Activated T-helper 1 cell treated with anti-CD3 and anti-CD28 coated beads, Interleukin-12 subunit alpha, Interleukin-12 subunit beta, Interleukin-2, Interleukin-4 antibody, amounts not matched to agents 30 ng/mL and 10 ng/mL and 1 ng/mL, durations not matched to agents 14 hours and 24 hours and 36 hours (primary cell): ENCODE measurements at regions of chr22 and their contacts with region 1.

Region 1: GRCh38 chr22:19479357-19480172 is at the start of gene CDC45:
- DNase-seq: peak; percentile 93
- H3K4me3 Mint-ChIP-seq: peak within 1 kb of the TSS; percentile 97
- H3K27ac Mint-ChIP-seq: peak within 1 kb of the TSS; percentile 99
- H3K4me1 Mint-ChIP-seq: peaks cover 47% of the 10 kb centered on the region
- H3K27me3 Mint-ChIP-seq: no peaks in the 10 kb centered on the region
- total RNA-seq, gene CDC45: 104 and 116 TPM in 2 replicates

Region 2: GRCh38 chr22:19109198-19110067 is 370.1 kb before region 1 on chr22:
- intact Hi-C with region 1: loop called (anchors 5 kb)
- DNase-seq: peak; percentile 42
- H3K4me3 Mint-ChIP-seq: peak overlapping the region; percentile 66
- H3K27ac Mint-ChIP-seq: peak overlapping the region; percentile 62
- H3K4me1 Mint-ChIP-seq: peaks cover 54% of the 10 kb centered on the region
- H3K27me3 Mint-ChIP-seq: no peaks in the 10 kb centered on the region

Region 3: GRCh38 chr22:19143967-19144400 is 335.6 kb before region 1 on chr22:
- intact Hi-C with region 1: loop called (anchors 1 kb)
- DNase-seq: peak; percentile 40
- H3K4me3 Mint-ChIP-seq: peak overlapping the region; percentile 98
- H3K27ac Mint-ChIP-seq: peak overlapping the region; percentile 97
- H3K4me1 Mint-ChIP-seq: peaks cover 23% of the 10 kb centered on the region
- H3K27me3 Mint-ChIP-seq: peaks cover 22% of the 10 kb centered on the region

Region 4: DNA sequence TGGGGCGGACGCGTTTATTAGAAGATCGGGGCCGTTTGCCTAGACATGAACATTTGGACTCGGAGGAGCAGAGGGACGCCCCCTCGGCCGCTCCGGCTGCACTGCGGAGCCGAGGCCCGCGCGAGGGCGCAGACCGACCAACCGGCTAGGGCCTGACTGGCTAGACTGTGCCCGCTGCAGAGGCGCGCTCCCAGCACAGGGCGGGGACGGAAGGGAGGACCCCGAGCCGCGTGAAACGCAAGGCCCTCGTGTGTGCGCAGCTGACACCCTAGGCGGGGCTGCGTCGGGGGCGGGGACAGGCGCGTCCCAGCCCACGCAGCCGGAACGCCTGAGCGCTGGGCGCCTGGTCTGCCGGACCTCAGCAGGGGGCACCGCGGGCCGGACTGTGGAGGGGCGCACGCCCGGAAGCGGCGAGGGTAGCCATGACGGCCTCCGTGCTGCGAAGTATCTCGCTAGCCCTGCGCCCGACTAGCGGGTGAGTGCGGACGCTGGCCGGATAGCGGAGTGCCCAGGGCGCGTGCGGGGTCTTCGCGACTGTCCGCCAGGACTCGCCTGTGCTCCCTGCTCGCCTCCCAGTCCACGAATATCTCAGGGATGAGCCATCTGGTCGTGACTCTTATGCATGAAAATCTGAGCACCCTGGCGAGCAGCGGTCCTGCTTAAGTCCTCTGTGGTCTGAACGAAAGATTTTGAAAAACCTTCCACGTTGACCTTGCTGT is 47.3 kb before region 1 on chr22 and contains the start of gene MRPL40:
- intact Hi-C with region 1: loop called (anchors 1 kb)
- DNase-seq: peak; percentile 88
- H3K4me3 Mint-ChIP-seq: peak within 1 kb of the TSS; percentile 92
- H3K27ac Mint-ChIP-seq: peak within 1 kb of the TSS; percentile 94
- H3K4me1 Mint-ChIP-seq: peaks cover 41% of the 10 kb centered on the region
- H3K27me3 Mint-ChIP-seq: no peaks in the 10 kb centered on the region
- total RNA-seq, gene MRPL40: 36.0 and 38.5 TPM in 2 replicates

Region 5: DNA sequence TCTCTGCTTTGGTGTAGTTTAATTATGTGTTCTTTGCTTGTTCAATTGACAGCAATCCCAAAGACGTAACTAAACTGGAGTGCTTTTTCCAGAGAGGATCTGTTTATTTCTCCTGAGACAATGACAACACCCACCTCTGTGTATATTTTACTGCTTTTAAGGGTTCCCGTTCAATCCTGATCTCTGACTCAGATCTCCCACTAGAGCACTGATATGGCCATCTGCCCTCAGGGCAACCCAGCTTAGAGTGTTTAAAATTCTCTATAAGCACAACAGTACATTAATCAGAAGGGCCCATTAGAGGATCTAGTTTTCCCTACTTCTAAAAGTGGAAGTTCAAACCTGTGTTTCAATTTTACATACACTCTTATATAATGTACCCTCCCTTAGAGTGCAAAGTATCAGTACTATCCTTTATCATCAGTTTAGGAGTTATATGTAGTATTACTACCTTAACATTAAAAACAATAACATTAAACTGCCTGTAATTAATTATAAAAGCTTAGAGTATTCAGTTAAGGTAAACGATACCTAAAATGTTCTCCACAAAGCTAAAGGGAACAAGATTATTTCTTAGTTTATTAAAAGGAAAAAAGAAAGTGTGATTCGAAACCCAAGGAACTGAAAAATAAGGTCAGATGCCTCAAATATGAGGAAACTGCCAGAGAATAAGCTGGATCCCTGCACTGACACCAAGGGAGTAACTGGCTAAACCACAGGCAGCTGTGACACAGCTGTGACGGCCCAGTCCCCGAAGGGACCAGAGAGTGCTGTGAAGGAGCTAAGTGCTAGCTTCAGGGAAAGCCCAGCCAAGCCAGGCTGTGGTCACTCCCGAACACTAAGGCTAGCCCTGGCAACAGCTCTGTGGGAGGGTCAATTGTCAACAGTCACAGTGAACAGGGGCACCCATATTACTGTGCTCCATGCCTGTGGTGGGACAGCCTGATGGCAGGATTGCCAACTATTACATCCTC is 15.8 kb before region 1 on chr22:
- intact Hi-C with region 1: no loop called
- DNase-seq: no peak
- H3K4me3 Mint-ChIP-seq: no peak overlapping the region
- H3K27ac Mint-ChIP-seq: no peak overlapping the region
- H3K4me1 Mint-ChIP-seq: peaks cover 22% of the 10 kb centered on the region
- H3K27me3 Mint-ChIP-seq: no peaks in the 10 kb centered on the region

Region 6: DNA sequence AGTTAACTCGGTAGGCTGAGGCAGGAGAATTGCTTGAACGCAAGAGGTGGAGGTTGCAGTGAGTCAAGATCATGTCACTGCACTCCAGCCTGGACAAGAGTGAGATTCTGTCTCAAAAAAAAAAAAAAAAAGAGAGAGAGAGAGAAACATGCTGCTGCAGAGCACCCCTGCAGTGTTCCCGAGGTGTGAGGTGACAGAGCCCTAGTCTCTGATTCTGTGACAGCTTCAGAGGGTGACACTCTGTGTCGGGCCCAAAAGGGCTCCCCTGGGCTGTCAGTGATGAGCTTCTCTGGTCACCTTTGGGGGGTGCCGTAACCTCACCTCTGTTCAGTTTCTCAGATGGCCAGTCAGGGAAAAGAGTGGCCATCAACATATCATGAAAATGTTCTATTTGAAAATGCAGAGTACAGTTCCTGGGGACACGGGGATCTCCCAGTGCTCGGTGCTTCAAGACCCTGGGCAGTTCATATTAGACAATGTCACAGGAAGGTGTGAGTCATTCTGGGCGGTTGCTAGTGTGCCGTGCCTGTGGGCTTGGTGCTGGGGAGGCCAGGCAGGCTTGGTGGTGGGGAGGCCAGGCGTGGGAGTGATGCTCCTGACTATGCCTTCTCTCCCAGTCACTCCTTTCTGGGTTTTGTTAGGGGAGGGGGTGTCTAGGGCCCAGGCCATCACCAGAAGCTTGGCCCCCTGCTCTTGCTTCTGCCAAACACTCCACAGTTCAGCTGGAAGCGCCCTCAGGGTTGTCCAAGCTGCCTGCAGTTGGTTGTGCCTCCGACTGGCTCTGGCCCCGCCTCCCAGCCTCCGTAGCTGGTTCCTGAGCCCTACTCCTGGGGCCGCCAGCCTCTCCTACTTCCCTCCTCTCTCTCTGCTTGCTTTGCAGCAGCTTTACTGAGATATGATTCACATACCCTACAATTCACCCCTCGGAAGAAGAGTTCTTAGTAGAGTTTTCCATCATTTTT is 97.2 kb after region 1 on chr22:
- intact Hi-C with region 1: loop called (anchors 1 kb)
- DNase-seq: peak; percentile 60
- H3K4me3 Mint-ChIP-seq: peak overlapping the region; percentile 27
- H3K27ac Mint-ChIP-seq: peak overlapping the region; percentile 80
- H3K4me1 Mint-ChIP-seq: peaks cover 44% of the 10 kb centered on the region
- H3K27me3 Mint-ChIP-seq: no peaks in the 10 kb centered on the region

Region 7: DNA sequence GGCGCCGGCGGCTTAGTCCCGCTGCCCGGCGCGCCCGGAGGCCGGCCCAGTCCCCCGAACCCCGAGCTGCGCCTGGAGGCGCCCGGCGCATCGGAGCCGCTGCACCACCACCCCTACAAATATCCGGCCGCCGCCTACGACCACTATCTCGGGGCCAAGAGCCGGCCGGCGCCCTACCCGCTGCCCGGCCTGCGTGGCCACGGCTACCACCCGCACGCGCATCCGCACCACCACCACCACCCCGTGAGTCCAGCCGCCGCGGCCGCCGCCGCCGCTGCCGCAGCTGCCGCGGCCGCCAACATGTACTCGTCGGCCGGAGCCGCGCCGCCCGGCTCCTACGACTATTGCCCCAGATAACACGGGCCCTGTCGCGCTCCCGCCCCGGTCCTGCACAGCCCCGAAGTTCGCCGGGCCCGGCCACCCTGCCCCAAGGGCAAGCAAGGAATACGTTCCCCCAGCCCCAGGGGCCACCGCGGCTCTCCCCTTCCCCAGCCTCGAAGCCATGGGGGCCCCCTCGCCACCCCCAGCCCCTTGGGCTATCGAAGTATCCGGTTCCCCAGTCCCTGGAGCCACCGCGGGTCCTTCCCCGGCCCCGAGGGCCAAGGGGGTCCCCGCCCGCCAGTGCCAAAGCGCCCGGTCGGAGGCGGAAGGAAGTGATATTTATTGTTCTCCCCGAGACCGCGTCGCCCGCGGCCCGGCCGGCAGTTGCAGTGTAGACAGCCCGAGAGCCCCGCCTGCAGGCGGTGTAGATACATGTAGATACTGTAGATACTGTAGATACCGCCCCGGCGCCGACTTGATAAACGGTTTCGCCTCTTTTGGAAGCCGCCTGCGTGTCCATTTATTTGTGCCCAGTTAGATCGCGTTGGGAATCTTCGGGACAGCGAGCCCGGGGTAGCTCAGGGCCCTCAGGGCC is 287.2 kb after region 1 on chr22:
- intact Hi-C with region 1: no loop called
- DNase-seq: peak; percentile 35
- H3K4me3 Mint-ChIP-seq: no peak overlapping the region
- H3K27ac Mint-ChIP-seq: no peak overlapping the region
- H3K4me1 Mint-ChIP-seq: no peaks in the 10 kb centered on the region
- H3K27me3 Mint-ChIP-seq: peaks cover 58% of the 10 kb centered on the region

Region 8: DNA sequence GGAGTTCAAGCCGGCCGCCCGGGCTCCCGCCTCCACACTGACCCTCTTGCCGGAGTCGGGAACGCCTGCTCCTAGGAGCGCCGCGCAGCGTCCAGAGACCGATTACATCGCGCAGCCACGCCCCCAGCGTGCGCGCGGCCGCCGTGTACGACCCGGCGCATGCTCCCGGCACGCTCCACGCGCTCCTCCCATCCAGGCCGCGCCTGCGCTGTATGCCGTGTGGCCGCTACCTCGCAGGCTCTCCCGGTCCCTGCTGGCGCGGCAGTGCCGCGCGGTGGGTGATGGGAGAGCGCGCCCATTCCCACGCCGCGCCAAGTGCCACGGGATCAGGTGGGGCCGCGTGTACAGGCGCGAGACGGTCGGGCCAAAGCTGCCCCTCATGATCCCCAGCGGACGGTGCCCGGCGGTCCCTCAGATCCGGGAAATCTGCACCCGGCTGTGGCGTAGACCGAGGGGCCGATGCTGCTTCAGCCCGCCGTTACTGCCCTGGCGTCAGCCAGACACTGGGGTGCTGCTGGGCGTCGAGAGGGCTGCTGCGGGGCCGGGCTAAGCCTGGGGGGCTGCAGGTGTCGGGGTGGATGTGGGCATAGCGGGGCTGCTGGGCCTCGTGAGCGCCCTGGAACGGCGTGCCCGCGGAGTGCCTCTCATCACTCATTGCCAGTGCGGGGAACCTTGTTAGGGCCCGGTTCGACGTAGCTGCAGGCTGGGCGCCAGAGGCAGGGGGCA is 375.4 kb after region 1 on chr22 and contains the starts of genes GNB1L and RTL10:
- intact Hi-C with region 1: loop called (anchors 1 kb)
- DNase-seq: peak; percentile 97
- H3K4me3 Mint-ChIP-seq: peak within 1 kb of the TSS; percentile 98
- H3K27ac Mint-ChIP-seq: peak within 1 kb of the TSS; percentile 91
- H3K4me1 Mint-ChIP-seq: peaks cover 40% of the 10 kb centered on the region
- H3K27me3 Mint-ChIP-seq: no peaks in the 10 kb centered on the region
- total RNA-seq, gene GNB1L: 20.6 and 21.5 TPM in 2 replicates
- total RNA-seq, gene RTL10: 22.2 and 24.1 TPM in 2 replicates